Naive thymus-derived CD4-positive, alpha-beta T cell (primary cell): ENCODE measurements at regions of chr3 and their contacts with region 1.

Region 1: DNA sequence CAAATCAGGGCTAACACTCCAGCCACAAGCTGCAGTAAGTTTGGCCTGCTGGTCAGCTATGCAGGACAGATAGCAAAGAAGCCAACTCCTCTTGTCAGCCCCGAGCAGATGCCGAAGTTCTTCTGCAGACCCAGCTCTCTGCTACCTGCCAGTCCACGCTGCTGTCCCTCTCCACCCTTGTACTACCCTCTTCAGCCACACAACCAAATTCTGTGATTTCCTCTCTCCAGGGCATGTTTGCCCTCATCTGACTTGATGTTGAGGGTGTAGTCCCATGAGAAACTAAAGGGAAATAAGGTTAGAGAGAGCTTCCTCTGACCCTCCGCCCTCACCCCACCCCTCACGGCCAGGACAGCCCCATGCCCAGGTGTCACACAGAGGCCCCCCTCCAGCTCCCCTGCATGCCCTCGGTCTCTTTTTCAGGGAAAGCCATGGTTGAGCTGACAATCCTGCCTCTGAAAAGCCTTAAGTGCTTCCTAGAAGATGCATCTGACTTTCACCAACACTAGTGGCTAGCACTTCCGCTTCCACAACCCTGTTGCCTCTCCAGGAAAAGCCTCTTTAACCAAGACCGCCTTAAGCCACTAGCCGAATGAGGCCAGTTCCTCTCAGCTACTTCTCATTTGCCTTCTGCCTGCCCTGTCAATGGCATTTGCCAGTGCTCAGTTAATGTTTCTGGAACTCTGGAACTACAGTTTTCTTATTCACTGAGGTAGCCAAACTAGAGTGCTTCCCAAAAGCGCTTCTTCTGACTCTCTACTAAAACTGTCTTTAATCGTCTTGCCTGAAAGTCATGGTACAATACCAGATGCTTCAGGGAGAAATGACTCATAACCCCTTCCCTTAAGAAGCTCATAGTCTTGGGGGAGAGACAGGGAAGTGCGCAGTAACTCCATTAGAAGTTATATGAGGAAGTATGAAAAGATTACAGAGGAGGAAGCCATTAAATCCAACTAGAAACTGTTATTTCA is 300.4 kb upstream of the STT3B start:
- DNase-seq: no peak
- ATAC-seq: peak; percentile 74
- H3K4me3 ChIP-seq: no peak overlapping the region
- H3K4me3 Mint-ChIP-seq: peak overlapping the region; percentile 7 to 68 (median 62)
- H3K27ac ChIP-seq: no peak overlapping the region
- H3K27ac Mint-ChIP-seq: peak overlapping the region; percentile 30 to 95 (median 67)
- H3K4me1 ChIP-seq: peaks cover 34 to 64% of the 10 kb centered on the region in 2 donors
- H3K4me1 Mint-ChIP-seq: peaks cover 59 to 81% (median 76%) of the 10 kb centered on the region in 7 donors
- H3K27me3 ChIP-seq: no peaks in the 10 kb centered on the region
- H3K27me3 Mint-ChIP-seq: no peaks in the 10 kb centered on the region

Region 2: GRCh38 chr3:31250116-31250777 is 17.9 kb after region 1 on chr3:
- CTCF ChIA-PET with region 1: no interaction called
- POLR2A ChIA-PET with region 1: no interaction called
- intact Hi-C with region 1: loop called in 1 of 2 experiments (anchors 1 kb)
- DNase-seq: no peak
- ATAC-seq: no peak
- H3K4me3 ChIP-seq: no peak overlapping the region
- H3K4me3 Mint-ChIP-seq: peak overlapping the region in 1 of 10 donors; percentile 4
- H3K27ac ChIP-seq: no peak overlapping the region
- H3K27ac Mint-ChIP-seq: peak overlapping the region in 1 of 9 donors; percentile 65
- H3K4me1 ChIP-seq: peaks cover 0 to 5% of the 10 kb centered on the region in 2 donors
- H3K4me1 Mint-ChIP-seq: peaks cover 14 to 66% (median 26%) of the 10 kb centered on the region in 7 donors
- H3K27me3 ChIP-seq: no peaks in the 10 kb centered on the region
- H3K27me3 Mint-ChIP-seq: no peaks in the 10 kb centered on the region